ENCODE measurements at regions of chr6 and their contacts with region 1.

Region 1: GRCh38 chr6:70107852-70108629 is 194.8 kb downstream of the COL9A1 start:
- DNase-seq: peak; percentile 45
- H3K4me3 ChIP-seq: no peak overlapping the region
- H3K27ac ChIP-seq: no peak overlapping the region
- H3K4me1 ChIP-seq: no peaks in the 10 kb centered on the region
- CTCF ChIP-seq: peak; percentile 87

Region 2: GRCh38 chr6:68634726-68635411 is 1473.2 kb before region 1 on chr6 and contains the start of gene ADGRB3:
- CTCF ChIA-PET with region 1: no interaction called
- POLR2A ChIA-PET with region 1: no interaction called
- intact Hi-C with region 1: loop called (anchors 5 kb)
- DNase-seq: no peak
- H3K4me3 ChIP-seq: no peak within 1 kb of the TSS
- H3K27ac ChIP-seq: no peak within 1 kb of the TSS
- H3K4me1 ChIP-seq: no peaks in the 10 kb centered on the region
- CTCF ChIP-seq: no peak
- total RNA-seq, gene ADGRB3: not detected in 2 replicates

Region 3: GRCh38 chr6:68876792-68877493 is 1231.1 kb before region 1 on chr6:
- CTCF ChIA-PET with region 1: no interaction called
- POLR2A ChIA-PET with region 1: no interaction called
- intact Hi-C with region 1: loop called (anchors 5 kb)
- DNase-seq: peak; percentile 34
- H3K4me3 ChIP-seq: no peak overlapping the region
- H3K27ac ChIP-seq: no peak overlapping the region
- H3K4me1 ChIP-seq: no peaks in the 10 kb centered on the region
- CTCF ChIP-seq: peak; percentile 82

Region 4: DNA sequence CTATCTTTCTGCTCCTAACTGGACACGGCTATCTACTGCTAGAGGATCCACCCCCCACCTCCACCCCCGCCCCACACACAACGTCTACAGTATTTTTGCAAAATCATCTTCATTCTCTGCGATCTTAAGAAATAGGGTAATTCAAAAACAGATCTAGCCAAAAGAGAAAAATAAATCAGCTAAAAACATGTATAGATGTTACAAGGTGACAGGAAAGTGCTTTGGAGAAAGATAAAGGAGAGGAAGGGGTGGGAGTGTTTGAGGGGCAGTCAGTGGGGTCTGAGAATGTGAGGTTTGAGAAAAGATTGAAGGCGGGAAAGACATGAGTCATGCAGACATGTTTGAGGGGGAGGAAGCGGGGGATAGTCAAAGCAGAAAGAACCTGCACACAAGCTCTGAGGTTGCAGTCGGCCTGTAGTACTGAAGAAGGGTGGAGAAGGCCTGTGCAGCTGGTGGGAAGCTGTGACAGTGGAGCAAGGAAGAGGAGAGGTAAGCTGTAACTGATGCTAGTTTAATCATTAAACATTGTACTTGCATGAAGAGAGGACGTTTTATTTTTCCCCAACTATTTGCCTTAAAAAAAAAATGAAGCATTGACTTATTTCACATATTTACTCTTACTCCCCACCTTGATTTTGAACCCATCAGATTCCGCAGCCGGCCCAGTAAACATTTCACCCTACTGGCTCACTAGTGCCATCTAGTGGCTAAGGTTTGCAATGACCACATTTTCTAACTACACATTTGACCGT is 1140.3 kb before region 1 on chr6:
- CTCF ChIA-PET with region 1: no interaction called
- POLR2A ChIA-PET with region 1: no interaction called
- intact Hi-C with region 1: loop called (anchors 10 kb)
- DNase-seq: peak; percentile 67
- H3K4me3 ChIP-seq: no peak overlapping the region
- H3K27ac ChIP-seq: no peak overlapping the region
- H3K4me1 ChIP-seq: no peaks in the 10 kb centered on the region
- CTCF ChIP-seq: peak; percentile 96

Region 5: DNA sequence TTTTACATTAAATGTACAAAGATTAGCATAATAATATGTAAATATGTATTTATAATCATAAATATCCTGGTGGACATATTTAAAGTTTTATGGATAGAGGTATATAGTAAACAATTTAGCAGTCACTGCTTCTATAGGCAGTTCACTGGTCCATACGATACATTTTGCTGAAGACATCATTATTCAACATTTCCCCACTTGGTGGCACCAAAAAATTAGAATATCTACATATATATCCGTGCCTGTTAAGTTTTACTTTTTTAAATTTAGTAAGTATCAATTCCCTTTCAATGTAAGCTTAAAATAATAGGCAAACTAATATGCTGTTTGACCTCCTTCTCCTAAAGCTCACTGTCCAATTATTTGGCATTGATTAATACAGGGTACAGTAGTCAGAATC is 375.4 kb before region 1 on chr6:
- CTCF ChIA-PET with region 1: no interaction called
- POLR2A ChIA-PET with region 1: no interaction called
- intact Hi-C with region 1: loop called (anchors 10 kb)
- DNase-seq: peak; percentile 23
- H3K4me3 ChIP-seq: no peak overlapping the region
- H3K27ac ChIP-seq: no peak overlapping the region
- H3K4me1 ChIP-seq: no peaks in the 10 kb centered on the region
- CTCF ChIP-seq: peak; percentile 73

Region 6: GRCh38 chr6:69835414-69836179 is 272.4 kb before region 1 on chr6:
- CTCF ChIA-PET with region 1: no interaction called
- POLR2A ChIA-PET with region 1: interaction called, 3 read pairs
- intact Hi-C with region 1: loop called (anchors 2 kb)
- DNase-seq: peak; percentile 61
- H3K4me3 ChIP-seq: no peak overlapping the region
- H3K27ac ChIP-seq: no peak overlapping the region
- H3K4me1 ChIP-seq: no peaks in the 10 kb centered on the region
- CTCF ChIP-seq: peak; percentile 92

Region 7: DNA sequence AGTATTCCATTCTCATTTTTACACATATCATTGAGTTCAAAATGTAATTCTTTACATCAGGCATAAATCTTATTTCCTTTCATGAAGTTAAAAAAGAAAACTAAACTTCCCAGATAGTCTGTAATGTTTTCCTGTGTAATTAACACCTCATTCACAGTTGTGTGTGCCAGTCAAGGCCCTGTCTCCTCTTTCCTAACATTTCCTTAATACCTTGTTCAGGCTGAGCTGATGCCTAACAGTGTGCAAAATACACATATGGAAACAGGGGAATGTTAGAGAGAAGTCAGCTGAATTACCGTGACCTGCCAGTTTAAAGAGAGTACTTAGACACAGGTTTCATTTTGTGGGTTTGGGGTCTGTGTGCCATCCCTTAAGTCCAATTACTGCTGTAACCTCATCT is 13.9 kb before region 1 on chr6:
- CTCF ChIA-PET with region 1: no interaction called
- POLR2A ChIA-PET with region 1: no interaction called
- intact Hi-C with region 1: no loop called
- DNase-seq: no peak
- H3K4me3 ChIP-seq: no peak overlapping the region
- H3K27ac ChIP-seq: no peak overlapping the region
- H3K4me1 ChIP-seq: no peaks in the 10 kb centered on the region
- CTCF ChIP-seq: no peak

Measured in OCI-LY7 (cell line).